ENCODE measurements at regions of chr20 and their contacts with region 1.

Region 1: DNA sequence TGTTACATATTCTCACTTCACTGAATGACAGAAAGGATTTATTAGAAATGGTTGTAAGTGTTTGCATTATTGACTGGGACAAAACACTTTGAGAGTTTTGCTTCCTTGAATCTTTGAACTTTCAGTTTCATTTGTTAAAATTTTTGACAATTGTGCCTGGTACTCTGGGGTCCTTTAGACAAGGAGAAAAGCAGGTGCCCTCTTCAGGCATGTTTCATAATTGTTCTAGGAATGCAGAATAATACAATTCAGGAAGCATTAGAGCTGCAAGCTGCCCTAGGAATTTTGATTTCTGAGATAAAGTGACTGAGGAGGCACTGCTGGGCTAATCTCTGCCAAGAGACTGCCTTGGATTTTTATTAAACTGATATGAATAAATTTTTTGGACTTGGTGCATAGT is 49.7 kb downstream of the TOP1 start:
- DNase-seq: peak; percentile 61
- H3K4me3 Mint-ChIP-seq: no peak overlapping the region
- H3K27ac Mint-ChIP-seq: peak overlapping the region; percentile 57
- H3K4me1 Mint-ChIP-seq: peaks cover 43% of the 10 kb centered on the region
- H3K27me3 Mint-ChIP-seq: no peaks in the 10 kb centered on the region
- CTCF ChIP-seq: peak; percentile 58

Region 2: DNA sequence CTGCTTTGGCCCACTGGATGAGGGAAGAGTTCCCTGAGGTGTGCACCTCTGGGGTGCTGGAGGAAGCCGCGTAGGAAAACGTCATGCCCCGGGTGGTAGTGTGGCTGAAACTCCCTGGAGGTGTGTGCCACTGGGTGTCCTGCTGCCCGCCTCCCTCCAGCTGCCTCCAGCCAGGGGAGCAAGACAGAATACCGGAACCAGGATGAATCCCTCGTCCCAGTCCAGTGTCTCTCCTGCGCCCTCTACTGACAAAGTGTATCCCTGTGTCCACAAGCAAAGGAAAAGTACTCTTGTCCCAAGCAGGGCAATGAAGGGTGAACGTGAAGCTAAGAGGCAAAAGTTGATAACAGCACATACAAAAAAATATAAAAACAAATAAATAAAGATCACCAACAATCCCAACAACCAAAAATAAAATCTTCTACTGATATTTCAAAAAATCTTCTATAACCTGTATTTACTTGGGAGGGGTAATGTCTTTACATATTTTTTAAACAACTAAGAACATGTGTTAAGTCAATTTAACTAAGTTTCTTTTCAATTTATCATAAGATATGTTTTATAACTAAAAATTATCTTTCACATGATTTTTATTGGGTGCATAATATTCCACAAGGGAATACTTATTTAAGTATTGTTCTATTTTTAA is 826.9 kb before region 1 on chr20:
- CTCF ChIA-PET with region 1: no interaction called
- intact Hi-C with region 1: no loop called
- DNase-seq: peak; percentile 24
- H3K4me3 Mint-ChIP-seq: no peak overlapping the region
- H3K27ac Mint-ChIP-seq: no peak overlapping the region
- H3K4me1 Mint-ChIP-seq: no peaks in the 10 kb centered on the region
- H3K27me3 Mint-ChIP-seq: peaks cover 3% of the 10 kb centered on the region
- CTCF ChIP-seq: peak; percentile 37

Region 3: DNA sequence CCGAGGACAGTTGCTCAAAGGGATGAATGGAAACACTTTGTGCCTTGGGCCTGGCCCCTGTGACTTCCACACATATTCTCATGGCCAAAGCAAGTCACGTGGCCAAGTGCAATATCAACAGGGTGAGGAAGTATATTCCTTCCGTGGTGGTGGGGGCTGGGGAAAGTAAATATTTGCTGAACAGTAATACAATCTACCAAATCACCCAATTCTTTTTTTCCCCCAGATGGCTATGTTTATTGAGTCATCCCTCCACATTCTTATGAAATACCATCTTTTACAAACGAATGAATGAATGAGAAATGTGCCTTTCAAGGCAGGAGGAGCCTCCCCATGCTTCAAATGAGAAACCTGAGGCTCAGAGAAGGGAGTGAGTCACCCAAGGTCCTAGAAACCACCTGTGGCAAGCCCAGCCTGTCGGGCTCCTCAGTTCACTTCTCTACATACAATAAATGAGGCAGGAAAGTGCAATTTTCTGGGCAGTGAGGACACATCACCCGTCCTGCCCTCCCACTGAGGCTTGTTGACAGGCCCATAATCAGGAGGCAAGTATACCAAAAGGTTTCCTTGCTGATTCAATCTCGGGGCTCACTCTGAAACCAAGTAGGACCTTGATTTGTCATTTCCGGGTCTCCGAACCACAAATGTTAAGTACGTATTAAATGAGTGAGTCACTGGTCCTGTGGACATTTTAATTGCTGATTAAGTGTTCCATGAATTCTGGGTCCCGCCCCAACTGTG is 75.0 kb before region 1 on chr20:
- CTCF ChIA-PET with region 1: no interaction called
- intact Hi-C with region 1: loop called (anchors 2 kb)
- DNase-seq: peak; percentile 93
- H3K4me3 Mint-ChIP-seq: peak overlapping the region; percentile 54
- H3K27ac Mint-ChIP-seq: peak overlapping the region; percentile 99
- H3K4me1 Mint-ChIP-seq: peaks cover 47% of the 10 kb centered on the region
- H3K27me3 Mint-ChIP-seq: no peaks in the 10 kb centered on the region
- CTCF ChIP-seq: no peak

Region 4: DNA sequence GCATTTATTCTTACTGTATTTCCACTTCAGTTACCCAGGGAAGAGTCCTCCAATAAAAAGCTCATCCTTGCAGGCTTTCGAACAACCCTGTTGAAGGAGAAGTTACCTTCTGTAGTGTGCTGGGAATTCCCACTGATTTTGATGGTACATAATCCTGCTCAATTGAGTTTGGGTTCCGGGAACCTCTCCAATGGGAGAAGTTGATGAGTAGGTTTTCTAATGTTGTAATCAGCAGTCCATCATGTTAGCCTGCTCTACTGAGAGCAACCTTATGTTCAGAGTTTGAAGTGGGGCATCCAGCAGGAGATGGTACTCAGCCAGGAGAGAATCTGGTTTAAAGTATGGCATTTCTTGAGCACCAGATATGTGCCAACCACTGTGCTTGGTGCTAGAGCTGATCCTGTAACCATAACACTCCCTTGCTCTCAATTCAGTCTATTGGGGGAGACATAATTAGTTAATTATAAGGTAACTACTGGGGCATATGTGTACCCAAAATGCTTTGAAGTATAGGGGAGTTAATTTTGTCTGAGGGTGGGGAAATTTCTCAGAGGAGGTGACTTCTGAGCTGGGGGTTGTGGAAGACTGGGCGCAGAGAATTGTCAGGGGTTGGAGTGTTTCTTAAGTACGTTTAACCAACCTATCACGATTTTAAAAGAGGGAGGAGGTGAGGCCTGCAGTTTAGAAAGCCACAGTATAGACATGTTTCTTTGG is 47.6 kb before region 1 on chr20:
- CTCF ChIA-PET with region 1: no interaction called
- intact Hi-C with region 1: loop called (anchors 2 kb)
- DNase-seq: no peak
- H3K4me3 Mint-ChIP-seq: peak overlapping the region; percentile 83
- H3K27ac Mint-ChIP-seq: peak overlapping the region; percentile 97
- H3K4me1 Mint-ChIP-seq: peaks cover 64% of the 10 kb centered on the region
- H3K27me3 Mint-ChIP-seq: no peaks in the 10 kb centered on the region
- CTCF ChIP-seq: no peak

Region 5: DNA sequence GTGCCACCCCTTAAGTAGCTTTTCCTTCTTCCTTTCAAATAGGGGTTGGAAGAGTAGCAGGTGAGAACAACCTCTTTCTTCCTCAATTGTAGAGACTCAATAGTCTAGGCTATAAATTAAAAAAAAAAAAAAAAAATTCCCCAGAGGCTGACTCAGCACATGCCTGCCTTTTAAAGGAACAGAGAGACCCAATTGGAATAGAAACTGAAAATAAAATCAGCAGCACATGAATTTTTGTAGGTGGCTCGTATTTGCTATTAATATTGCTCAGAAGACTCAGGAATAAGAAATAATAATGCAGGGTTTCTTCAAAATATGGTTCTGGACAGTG is 30.4 kb before region 1 on chr20:
- CTCF ChIA-PET with region 1: interaction called, 3 read pairs
- intact Hi-C with region 1: loop called (anchors 2 kb)
- DNase-seq: no peak
- H3K4me3 Mint-ChIP-seq: peak overlapping the region; percentile 48
- H3K27ac Mint-ChIP-seq: peak overlapping the region; percentile 55
- H3K4me1 Mint-ChIP-seq: peaks cover 89% of the 10 kb centered on the region
- H3K27me3 Mint-ChIP-seq: no peaks in the 10 kb centered on the region
- CTCF ChIP-seq: no peak

Region 6: DNA sequence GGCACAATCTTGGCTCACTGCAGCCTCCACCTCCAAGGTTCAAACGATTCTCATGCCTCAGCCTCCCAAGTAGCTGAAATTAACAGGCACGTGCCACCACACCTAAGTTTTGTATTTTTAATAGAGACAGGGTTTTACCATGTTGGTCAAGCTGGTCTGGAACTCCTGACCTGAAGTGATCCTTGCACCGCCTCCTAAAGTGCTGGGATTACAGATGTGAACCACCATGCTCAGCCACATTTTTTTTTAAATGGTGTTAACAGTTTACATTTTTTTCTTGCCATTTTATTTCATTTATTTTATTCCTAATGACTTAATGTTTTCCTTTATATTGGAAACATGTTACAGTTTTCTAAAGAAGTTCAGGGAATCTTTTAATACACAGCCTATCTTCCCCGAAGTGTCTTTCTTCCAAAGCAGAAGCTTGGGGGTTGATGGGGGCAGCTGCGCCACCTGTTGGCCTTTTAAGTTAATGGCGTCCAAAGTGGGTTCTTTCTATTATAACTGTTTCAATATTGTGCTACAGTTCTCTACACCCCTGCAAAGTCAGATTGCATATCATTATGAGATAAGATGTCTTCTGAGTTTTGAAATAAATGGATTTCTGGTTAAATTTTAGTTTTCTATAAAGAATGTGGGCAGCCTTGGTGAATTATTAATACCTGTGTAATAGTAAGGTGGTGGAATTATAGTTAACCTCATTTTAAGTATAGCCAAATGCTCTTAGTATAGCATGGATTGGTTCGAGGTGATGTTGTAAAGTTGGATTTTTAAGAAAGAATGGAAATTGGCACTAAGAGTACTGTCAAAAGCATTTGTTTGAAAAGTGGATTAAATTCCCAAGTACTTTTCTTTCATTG is 17.0 kb after region 1 on chr20:
- CTCF ChIA-PET with region 1: interaction called, 4 read pairs
- intact Hi-C with region 1: loop called (anchors 1 kb)
- DNase-seq: peak; percentile 57
- H3K4me3 Mint-ChIP-seq: no peak overlapping the region
- H3K27ac Mint-ChIP-seq: no peak overlapping the region
- H3K4me1 Mint-ChIP-seq: no peaks in the 10 kb centered on the region
- H3K27me3 Mint-ChIP-seq: no peaks in the 10 kb centered on the region
- CTCF ChIP-seq: peak; percentile 89